ENCODE measurements at regions of chr6 and their contacts with region 1.

Region 1: DNA sequence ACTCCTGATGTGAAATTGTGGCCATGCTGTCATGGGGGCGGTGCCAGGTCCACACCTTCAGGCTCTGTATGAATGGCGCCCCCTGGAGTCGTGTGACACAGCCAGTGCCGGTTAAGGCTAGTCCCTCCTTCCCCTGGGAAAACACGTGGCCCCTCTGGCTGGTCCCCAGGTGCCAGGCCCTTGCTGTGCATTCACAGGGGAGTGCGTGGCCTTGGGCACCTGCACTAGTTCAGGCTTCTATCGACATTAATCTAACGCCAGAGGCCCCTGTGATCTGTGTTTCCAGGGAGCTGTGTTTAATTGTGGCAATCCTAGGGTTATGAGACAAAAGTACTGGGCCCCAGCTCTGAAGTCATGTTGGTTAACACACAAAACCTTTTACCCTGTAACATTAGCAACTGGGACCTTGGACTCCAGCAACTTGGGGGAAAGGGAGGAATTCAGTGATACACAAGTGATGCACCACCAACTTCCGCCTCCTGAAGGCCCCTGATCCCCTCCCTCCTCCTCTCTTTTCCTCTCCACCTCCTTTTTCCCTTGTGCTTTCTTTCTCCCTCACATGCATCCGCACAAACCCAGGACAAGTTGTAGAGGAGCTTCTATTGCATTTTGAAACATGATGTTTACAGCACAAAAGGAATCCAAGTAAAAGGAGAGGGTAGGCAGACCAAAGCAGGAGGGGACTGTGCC is 74.0 kb downstream of the SSR1 start:
- DNase-seq: peak; percentile 94
- ATAC-seq: peak; percentile 80
- H3K4me3 ChIP-seq: peak overlapping the region in 1 of 3 experiments; percentile 34; a peak in 2 of 6 replicates
- H3K27ac ChIP-seq: peak overlapping the region; percentile 90
- H3K4me1 ChIP-seq: peaks cover 99% of the 10 kb centered on the region
- H3K27me3 ChIP-seq: no peaks in the 10 kb centered on the region
- CTCF ChIP-seq: peak; percentile 98
- EP300 ChIP-seq: peak; percentile 43 to 72; a peak in 2 of 4 replicates
- POLR2A ChIP-seq: peak in 1 of 2 experiments; percentile 58; a peak in 2 of 4 replicates
- RAD21 ChIP-seq: peak; percentile 87

Region 2: GRCh38 chr6:6676910-6677441 is 562.1 kb before region 1 on chr6:
- CTCF ChIA-PET with region 1: interaction called, 8 read pairs
- POLR2A ChIA-PET with region 1: no interaction called
- in situ Hi-C with region 1: no loop called
- intact Hi-C with region 1: loop called (anchors 1 kb)
- DNase-seq: peak; percentile 67
- ATAC-seq: peak; percentile 69
- H3K4me3 ChIP-seq: no peak overlapping the region
- H3K27ac ChIP-seq: no peak overlapping the region
- H3K4me1 ChIP-seq: peaks cover 21% of the 10 kb centered on the region
- H3K27me3 ChIP-seq: peaks cover 0 to 10% of the 10 kb centered on the region in 2 experiments; a peak in 2 of 5 replicates
- CTCF ChIP-seq: peak; percentile 90
- EP300 ChIP-seq: no peak
- POLR2A ChIP-seq: no peak
- RAD21 ChIP-seq: peak; percentile 82

Region 3: GRCh38 chr6:6724539-6725467 is 514.2 kb before region 1 on chr6:
- CTCF ChIA-PET with region 1: interaction called, 13 read pairs
- POLR2A ChIA-PET with region 1: no interaction called
- in situ Hi-C with region 1: loop called (anchors 5 kb)
- intact Hi-C with region 1: loop called (anchors 1 kb)
- DNase-seq: peak; percentile 51
- ATAC-seq: peak; percentile 90
- H3K4me3 ChIP-seq: peak overlapping the region; percentile 26 to 75 (median 31)
- H3K27ac ChIP-seq: no peak overlapping the region
- H3K4me1 ChIP-seq: peaks cover 31% of the 10 kb centered on the region
- H3K27me3 ChIP-seq: peaks cover 0 to 4% of the 10 kb centered on the region in 2 experiments; a peak in 2 of 5 replicates
- CTCF ChIP-seq: peak; percentile 90
- EP300 ChIP-seq: no peak
- POLR2A ChIP-seq: no peak
- RAD21 ChIP-seq: peak; percentile 74

Region 4: GRCh38 chr6:7159790-7160525 is 79.1 kb before region 1 on chr6:
- CTCF ChIA-PET with region 1: no interaction called
- POLR2A ChIA-PET with region 1: no interaction called
- in situ Hi-C with region 1: no loop called
- intact Hi-C with region 1: loop called (anchors 2 kb)
- DNase-seq: peak; percentile 38
- ATAC-seq: peak; percentile 18
- H3K4me3 ChIP-seq: no peak overlapping the region
- H3K27ac ChIP-seq: peak overlapping the region; percentile 88
- H3K4me1 ChIP-seq: peaks cover 100% of the 10 kb centered on the region
- H3K27me3 ChIP-seq: no peaks in the 10 kb centered on the region
- CTCF ChIP-seq: no peak
- EP300 ChIP-seq: no peak
- POLR2A ChIP-seq: no peak
- RAD21 ChIP-seq: no peak

Region 5: DNA sequence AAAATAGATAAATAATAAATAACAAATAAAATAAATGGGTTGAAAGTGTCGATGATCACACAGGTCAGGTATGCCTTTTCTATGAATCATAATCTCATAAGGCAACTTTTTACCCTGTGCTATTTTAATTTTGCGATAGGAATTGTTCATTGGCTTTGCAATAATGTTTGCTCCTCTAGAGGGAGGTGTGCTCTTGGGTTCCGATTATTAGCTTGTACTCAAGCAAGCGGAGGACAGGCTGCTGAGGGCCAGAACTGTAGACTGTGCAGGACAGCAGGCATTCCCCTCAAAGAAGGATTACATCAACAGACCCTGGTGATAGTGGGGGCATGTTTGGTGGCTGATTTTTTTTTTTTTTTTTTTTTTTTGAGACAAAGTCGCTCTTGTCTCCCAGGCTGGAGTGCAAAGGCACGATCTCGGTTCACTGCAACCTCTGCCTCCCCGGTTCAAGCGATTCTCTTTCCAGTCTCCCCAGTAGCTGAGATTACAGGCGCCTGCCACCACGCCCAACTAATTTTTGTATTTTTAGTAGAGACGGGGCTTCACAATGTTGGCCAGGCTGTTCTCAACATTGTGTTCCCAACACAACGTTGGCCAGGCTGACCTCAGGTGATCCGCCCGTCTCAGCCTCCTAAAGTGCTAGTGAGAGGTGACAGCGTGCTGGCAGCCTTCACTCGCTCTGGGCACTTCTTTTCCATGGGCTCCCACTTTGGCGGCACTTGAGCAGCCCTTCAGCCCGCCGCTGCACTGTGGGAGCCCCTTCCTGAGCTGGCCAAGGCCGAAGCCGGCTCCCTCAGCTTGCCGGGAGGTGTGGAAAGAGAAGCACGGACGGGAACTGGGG is 186.1 kb after region 1 on chr6:
- CTCF ChIA-PET with region 1: no interaction called
- POLR2A ChIA-PET with region 1: no interaction called
- in situ Hi-C with region 1: no loop called
- intact Hi-C with region 1: no loop called
- DNase-seq: peak; percentile 79
- ATAC-seq: peak; percentile 85
- H3K4me3 ChIP-seq: no peak overlapping the region
- H3K27ac ChIP-seq: no peak overlapping the region
- H3K4me1 ChIP-seq: peaks cover 24% of the 10 kb centered on the region
- H3K27me3 ChIP-seq: no peaks in the 10 kb centered on the region
- CTCF ChIP-seq: peak; percentile 87
- EP300 ChIP-seq: no peak
- POLR2A ChIP-seq: no peak
- RAD21 ChIP-seq: peak; percentile 84

Region 6: DNA sequence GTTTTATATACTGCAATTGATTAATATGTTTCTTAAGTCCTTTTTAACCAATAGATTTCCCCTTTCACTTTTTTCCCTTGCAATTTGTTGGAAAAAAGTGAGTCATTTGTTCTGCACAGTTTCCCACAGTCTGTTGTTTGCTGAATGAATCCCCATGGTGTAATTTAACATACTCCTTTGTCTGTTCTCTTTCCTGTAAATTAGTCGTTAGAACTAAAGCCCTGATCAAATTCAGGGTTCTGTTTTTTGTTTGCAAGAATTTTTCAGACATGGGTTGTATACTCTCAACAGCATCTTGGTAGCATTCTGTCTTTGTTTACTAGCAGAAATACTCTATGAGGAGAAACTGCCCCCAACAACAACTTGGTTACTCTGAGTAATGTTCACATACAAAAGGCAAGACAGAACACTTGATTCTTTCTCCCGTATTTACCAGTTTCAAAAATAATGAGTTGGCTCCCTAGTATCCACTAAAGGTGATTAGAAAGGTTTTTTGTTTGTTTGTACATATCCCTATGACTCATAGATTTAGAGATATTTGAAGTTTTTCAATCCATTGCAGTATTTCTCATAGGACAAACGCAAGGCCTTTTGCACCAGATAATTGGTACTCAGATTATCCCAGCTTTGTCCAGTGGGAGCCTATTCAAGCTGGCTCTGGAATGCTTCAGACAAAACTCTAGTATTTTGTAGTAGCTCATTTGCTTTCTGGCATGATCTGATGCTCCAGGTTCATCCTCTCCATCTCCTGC is 808.7 kb after region 1 on chr6:
- CTCF ChIA-PET with region 1: no interaction called
- POLR2A ChIA-PET with region 1: no interaction called
- in situ Hi-C with region 1: no loop called
- intact Hi-C with region 1: no loop called
- DNase-seq: peak; percentile 12
- ATAC-seq: no peak
- H3K4me3 ChIP-seq: no peak overlapping the region
- H3K27ac ChIP-seq: no peak overlapping the region
- H3K4me1 ChIP-seq: 0 out of 2 replicates have a peak, but pooled peaks cover 6% of the 10 kb centered on the region
- H3K27me3 ChIP-seq: no peaks in the 10 kb centered on the region
- CTCF ChIP-seq: no peak
- EP300 ChIP-seq: no peak
- POLR2A ChIP-seq: no peak
- RAD21 ChIP-seq: no peak

Measured in HepG2 (cell line).